Spleen (tissue), 13 donors: ENCODE measurements at regions of chr3 and their contacts with region 1.

Region 1: DNA sequence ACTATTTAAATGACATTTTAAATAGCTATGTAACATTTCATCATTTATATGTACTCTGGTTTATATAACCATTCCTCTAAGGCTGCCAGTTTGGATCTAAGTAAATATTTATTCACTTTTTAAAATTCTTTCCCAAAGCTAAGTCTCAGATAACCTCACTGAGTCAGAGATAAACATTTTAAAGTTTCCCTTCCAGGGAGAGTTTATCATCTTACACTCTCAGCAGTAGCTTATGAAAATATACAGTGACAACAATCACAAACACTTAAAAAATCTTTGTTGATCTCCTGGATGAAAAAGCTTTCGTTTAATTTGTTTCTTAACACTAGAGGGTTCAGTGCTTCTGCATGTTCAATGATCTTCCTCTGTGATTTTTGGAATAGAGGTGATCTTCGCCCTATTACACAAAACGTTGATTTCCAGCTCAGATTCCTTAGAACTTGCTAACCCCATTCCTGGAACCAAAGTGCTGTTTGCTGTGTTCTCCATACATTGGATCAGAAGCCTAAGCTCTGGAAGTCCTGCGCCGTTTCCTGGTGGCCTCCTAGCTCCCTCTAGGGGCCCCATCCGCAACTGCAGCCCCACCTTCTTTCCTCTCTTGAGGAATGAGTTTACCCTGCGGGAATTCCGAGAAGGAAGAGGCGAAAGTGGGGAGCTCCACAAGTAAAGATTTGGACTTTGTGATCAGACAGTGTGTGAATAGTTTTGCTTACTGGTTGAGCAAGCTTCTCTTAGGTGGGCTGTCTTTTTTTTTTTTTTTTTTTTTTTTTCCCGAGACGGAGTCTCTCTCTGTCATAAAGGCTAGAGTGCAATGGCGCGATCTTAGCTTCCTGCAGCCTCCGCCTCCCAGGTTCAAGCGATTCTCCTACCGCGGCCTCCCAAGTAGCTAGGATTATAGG is 29.3 kb upstream of the SACM1L start:
- DNase-seq: peak; percentile 82
- H3K4me3 ChIP-seq: no peak overlapping the region
- H3K27ac ChIP-seq: no peak overlapping the region
- H3K4me1 ChIP-seq: peaks cover 11 to 68% (median 40%) of the 10 kb centered on the region in 6 donors
- H3K27me3 ChIP-seq: no peaks in the 10 kb centered on the region
- CTCF ChIP-seq: peak; percentile 7 to 90 (median 82)
- POLR2A ChIP-seq: no peak

Region 2: GRCh38 chr3:45513041-45513440 is 146.9 kb before region 1 on chr3:
- intact Hi-C with region 1: loop called (anchors 2 kb)
- DNase-seq: no peak
- H3K4me3 ChIP-seq: no peak overlapping the region
- H3K27ac ChIP-seq: no peak overlapping the region
- H3K4me1 ChIP-seq: peaks cover 0 to 22% (median 8%) of the 10 kb centered on the region in 6 donors
- H3K27me3 ChIP-seq: no peaks in the 10 kb centered on the region
- CTCF ChIP-seq: no peak
- POLR2A ChIP-seq: no peak

Region 3: DNA sequence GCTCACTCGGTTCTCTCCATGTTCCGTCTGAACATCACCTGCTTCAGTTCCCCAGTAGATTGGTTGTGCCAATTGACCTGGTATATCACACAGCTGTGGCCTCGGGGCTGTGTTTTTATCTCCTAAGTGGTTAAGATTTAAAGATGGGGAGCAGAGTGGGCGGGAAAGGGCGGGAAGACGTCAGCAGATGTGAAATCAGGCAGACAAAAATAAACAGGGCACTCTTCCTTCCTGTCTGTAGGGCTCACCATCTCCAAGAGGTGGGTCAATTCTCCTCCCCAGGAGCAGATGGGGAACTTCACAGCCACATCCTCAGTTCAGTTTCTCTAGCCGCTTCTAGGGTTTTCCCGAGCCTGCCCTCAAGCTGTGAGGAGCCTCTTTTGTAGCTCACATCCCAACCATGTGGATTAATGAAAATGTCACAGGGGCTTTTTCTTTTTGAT is 92.2 kb before region 1 on chr3:
- intact Hi-C with region 1: no loop called
- DNase-seq: no peak
- H3K4me3 ChIP-seq: no peak overlapping the region
- H3K27ac ChIP-seq: peak overlapping the region in 4 of 8 donors; percentile 15 to 54 (median 31)
- H3K4me1 ChIP-seq: peaks cover 5 to 53% (median 34%) of the 10 kb centered on the region in 6 donors
- H3K27me3 ChIP-seq: no peaks in the 10 kb centered on the region
- CTCF ChIP-seq: no peak
- POLR2A ChIP-seq: no peak